Posterior vena cava (tissue), 2 donors: ENCODE measurements at regions of chr5 and their contacts with region 1.

Region 1: GRCh38 chr5:111092062-111092853 is at the start of gene WDR36:
- DNase-seq: peak; percentile 96
- total RNA-seq, gene WDR36: 17.6 to 22.3 TPM

Region 2: GRCh38 chr5:110769000-110769681 is 323.1 kb before region 1 on chr5:
- intact Hi-C with region 1: loop called in 1 of 2 experiments (anchors 10 kb)
- DNase-seq: no peak

Region 3: DNA sequence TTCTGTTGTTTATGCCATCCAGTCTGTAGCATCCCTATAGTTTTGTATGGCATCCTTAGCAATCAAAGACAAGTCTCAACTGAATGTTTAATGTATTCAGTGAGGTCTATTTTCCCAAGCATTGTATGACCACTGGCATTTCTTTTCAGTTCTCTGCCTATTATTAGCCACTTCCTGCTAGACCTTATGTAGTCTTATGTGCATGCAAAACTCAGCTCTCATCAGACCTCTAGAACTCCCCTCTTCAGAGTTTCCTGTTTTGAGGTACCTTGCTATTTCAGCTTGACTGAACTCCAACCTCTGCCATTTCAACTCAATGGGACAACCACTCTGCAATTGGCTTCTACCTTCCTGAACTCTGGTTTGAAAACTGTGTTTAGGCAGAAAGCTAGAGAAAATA is 240.2 kb before region 1 on chr5:
- intact Hi-C with region 1: no loop called
- DNase-seq: no peak